Panc1 (cell line): ENCODE measurements at regions of chr1 and their contacts with region 1.

Region 1: DNA sequence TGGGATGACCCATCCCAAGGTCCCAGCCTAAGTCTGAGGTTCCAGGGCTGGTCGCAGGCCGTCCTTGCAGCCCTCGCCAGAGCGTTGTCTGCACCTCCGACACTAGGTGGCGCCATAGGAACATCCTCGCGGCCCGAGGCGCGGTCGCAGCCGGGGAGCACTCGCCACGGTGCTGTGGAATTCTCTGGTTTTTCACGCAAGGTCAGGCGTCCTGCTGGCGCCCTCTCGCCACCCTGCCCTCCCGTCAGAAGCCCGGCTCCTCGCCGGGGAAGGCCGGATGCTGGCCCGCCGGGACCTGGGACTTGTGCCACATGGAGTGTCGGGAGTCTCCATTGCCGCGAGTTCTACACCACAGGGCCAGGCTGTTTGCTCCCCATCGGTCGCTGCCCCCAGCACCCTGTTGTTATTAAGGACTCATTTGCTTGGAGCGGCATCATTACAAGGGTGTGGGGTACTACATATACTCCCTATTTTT is 196.8 kb upstream of the LMO4 start:
- DNase-seq: peak; percentile 30
- ATAC-seq: peak; percentile 98
- H3K4me3 ChIP-seq: peak overlapping the region; percentile 45 to 68
- H3K27ac ChIP-seq: peak overlapping the region; percentile 58
- H3K4me1 ChIP-seq: no peaks in the 10 kb centered on the region
- H3K27me3 ChIP-seq: peaks cover 7% of the 10 kb centered on the region
- CTCF ChIP-seq: peak; percentile 98

Region 2: DNA sequence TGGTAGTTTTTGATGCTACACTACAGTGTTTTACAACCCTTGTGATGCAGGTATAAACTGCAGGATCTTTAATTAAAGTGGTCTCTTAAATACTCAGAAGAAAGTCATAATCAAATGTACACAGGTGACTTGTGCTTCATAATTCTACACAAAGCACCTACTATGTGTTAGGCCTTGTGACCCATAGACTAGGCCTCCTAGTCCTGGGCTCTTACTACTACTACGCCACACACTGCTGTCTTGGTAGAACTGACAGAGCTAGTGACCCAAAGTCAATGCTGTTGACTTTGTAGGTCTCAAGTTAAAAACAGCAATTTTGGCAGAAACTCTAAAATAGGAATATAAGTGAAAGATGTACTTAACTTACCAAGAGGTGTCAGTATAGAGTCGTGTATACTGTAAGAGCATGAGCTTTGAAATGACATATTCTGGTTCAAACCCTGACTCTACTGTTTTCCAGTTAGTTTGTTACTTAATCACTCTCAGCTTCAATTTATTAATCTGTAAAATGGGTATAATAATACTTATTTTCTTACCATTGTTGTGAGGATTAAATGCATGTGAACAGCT is 148.2 kb after region 1 on chr1:
- CTCF ChIA-PET with region 1: no interaction called
- POLR2A ChIA-PET with region 1: no interaction called
- in situ Hi-C with region 1: no loop called
- intact Hi-C with region 1: loop called (anchors 10 kb)
- DNase-seq: no peak
- ATAC-seq: no peak
- H3K4me3 ChIP-seq: no peak overlapping the region
- H3K27ac ChIP-seq: no peak overlapping the region
- H3K4me1 ChIP-seq: no peaks in the 10 kb centered on the region
- H3K27me3 ChIP-seq: peaks cover 9% of the 10 kb centered on the region
- CTCF ChIP-seq: peak; percentile 36; the same call in 1 of the 2 replicates

Region 3: GRCh38 chr1:87328272-87329050 is 196.6 kb after region 1 on chr1 and contains the start of gene LMO4:
- CTCF ChIA-PET with region 1: no interaction called
- POLR2A ChIA-PET with region 1: no interaction called
- in situ Hi-C with region 1: no loop called
- intact Hi-C with region 1: loop called (anchors 10 kb)
- DNase-seq: peak; percentile 90
- ATAC-seq: peak; percentile 95
- H3K4me3 ChIP-seq: peak within 1 kb of the TSS; percentile 86 to 87
- H3K27ac ChIP-seq: peak within 1 kb of the TSS; percentile 96
- H3K4me1 ChIP-seq: peaks cover 36% of the 10 kb centered on the region
- H3K27me3 ChIP-seq: no peaks in the 10 kb centered on the region
- CTCF ChIP-seq: no peak
- total RNA-seq, gene LMO4: 38.3 TPM